SK-N-SH (cell line): ENCODE measurements at regions of chr4 and their contacts with region 1.

Region 1: GRCh38 chr4:153634738-153635353 is 49.2 kb upstream of the TLR2 start:
- DNase-seq: peak; percentile 56
- H3K4me3 ChIP-seq: no peak overlapping the region; a peak in 1 of 4 replicates
- H3K27ac ChIP-seq: no peak overlapping the region
- H3K4me1 ChIP-seq: no peaks in the 10 kb centered on the region
- H3K27me3 ChIP-seq: no peaks in the 10 kb centered on the region
- CTCF ChIP-seq: peak; percentile 65
- EP300 ChIP-seq: no peak
- RAD21 ChIP-seq: peak; percentile 67

Region 2: DNA sequence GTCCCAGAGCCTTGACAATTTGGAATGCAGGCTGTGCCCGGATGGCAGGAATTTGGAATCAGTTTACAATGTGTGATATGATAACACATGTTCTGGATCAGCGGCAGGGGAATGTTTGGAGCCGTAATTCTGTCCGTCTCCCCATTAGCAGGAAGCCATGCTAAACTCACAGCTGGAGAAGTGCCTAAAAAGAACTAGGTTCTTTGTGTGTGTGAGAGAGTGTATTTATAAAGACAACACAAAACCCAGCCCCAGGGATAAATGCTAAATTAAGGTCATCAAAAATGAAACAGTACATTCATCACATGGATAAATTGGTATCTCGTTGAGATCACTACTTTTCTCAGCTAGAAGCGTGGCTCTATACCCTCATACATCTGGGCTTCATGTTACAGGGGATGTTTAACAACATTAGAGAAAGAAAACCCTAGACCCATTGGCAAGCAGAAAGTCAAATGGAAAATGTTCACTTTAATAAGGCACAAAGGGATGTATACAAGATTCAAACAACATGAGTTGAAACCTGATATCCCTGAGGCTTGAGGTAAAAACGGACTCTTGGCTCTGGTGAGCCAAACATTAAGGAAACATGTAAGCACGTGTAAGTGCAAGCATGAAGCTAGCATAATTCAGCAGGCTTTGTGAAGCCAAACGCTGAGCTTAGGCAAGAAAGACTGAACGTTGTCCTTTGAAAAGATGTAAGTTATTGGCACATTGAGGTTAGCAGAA is 186.7 kb before region 1 on chr4:
- CTCF ChIA-PET with region 1: no interaction called
- POLR2A ChIA-PET with region 1: no interaction called
- DNase-seq: peak; percentile 39
- H3K4me3 ChIP-seq: no peak overlapping the region
- H3K27ac ChIP-seq: 0 out of 4 replicates have a peak overlapping the region, but pooled peaks of 1 of the 2 experiments have one; percentile 2
- H3K4me1 ChIP-seq: peaks cover 3% of the 10 kb centered on the region in 2 experiments; a peak in 2 of 4 replicates
- H3K27me3 ChIP-seq: no peaks in the 10 kb centered on the region
- CTCF ChIP-seq: no peak
- EP300 ChIP-seq: no peak
- RAD21 ChIP-seq: no peak

Region 3: GRCh38 chr4:153620352-153620751 is 14.5 kb before region 1 on chr4:
- CTCF ChIA-PET with region 1: interaction called, 13 read pairs
- POLR2A ChIA-PET with region 1: no interaction called
- DNase-seq: no peak
- H3K4me3 ChIP-seq: no peak overlapping the region
- H3K27ac ChIP-seq: peak overlapping the region; percentile 3 to 64; a peak in 2 of 4 replicates
- H3K4me1 ChIP-seq: peaks cover 0 to 17% of the 10 kb centered on the region in 2 experiments; a peak in 2 of 4 replicates
- H3K27me3 ChIP-seq: no peaks in the 10 kb centered on the region
- CTCF ChIP-seq: no peak
- EP300 ChIP-seq: no peak
- RAD21 ChIP-seq: no peak

Region 4: DNA sequence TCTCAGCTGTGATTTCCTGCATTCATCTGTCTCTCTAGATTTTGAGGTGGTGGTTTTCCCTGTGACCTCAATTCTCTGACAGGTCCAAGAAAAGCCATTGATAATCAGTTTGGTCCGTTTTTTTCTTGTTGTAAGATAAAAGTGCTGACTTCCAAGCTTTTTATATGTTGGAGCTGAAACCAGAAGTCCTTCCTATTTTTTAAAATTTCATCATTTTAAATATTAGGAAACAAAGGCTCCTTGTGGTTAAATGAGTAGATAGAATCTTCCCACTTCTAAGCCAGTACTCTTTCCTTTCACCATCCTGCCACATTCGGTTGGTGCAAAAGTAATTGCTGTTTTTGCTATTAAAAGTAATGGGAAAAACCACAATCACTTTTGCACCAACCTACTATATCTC is 106.7 kb after region 1 on chr4:
- CTCF ChIA-PET with region 1: interaction called, 14 read pairs
- POLR2A ChIA-PET with region 1: no interaction called
- DNase-seq: no peak
- H3K4me3 ChIP-seq: no peak overlapping the region
- H3K27ac ChIP-seq: no peak overlapping the region
- H3K4me1 ChIP-seq: no peaks in the 10 kb centered on the region
- H3K27me3 ChIP-seq: no peaks in the 10 kb centered on the region
- CTCF ChIP-seq: no peak
- EP300 ChIP-seq: no peak
- RAD21 ChIP-seq: no peak